MCF 10A (cell line): ENCODE measurements at regions of chr14 and their contacts with region 1.

Region 1: DNA sequence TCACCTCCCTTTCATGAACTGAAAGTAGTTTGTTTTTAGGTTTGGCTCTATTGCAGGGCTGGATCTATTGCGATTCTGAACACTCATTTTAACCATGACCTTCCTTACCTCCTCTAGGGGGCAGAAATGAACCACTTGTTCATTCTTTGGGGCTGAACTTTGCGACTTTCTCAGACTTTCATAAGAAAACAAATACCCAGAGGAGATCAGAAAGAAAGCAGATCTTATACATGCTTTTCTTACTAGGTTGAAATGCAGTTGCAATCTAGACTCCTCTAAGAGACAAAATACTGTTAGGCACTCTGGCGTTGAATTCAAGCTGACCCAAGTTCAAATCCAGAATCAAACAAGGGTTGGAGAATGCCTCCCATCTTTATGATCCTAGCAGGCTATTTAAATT is 32.6 kb upstream of the PLEKHG3 start:
- DNase-seq: peak; percentile 81
- H3K4me3 Mint-ChIP-seq: no peak overlapping the region
- H3K27ac Mint-ChIP-seq: no peak overlapping the region
- H3K4me1 Mint-ChIP-seq: peaks cover 41% of the 10 kb centered on the region
- H3K27me3 Mint-ChIP-seq: no peaks in the 10 kb centered on the region
- CTCF ChIP-seq: peak; percentile 69

Region 2: GRCh38 chr14:64591809-64592208 is 79.8 kb before region 1 on chr14:
- CTCF ChIA-PET with region 1: no interaction called
- POLR2A ChIA-PET with region 1: no interaction called
- intact Hi-C with region 1: no loop called
- DNase-seq: no peak
- H3K4me3 Mint-ChIP-seq: no peak overlapping the region
- H3K27ac Mint-ChIP-seq: no peak overlapping the region
- H3K4me1 Mint-ChIP-seq: no peaks in the 10 kb centered on the region
- H3K27me3 Mint-ChIP-seq: no peaks in the 10 kb centered on the region
- CTCF ChIP-seq: no peak

Region 3: GRCh38 chr14:64654246-64654900 is 17.2 kb before region 1 on chr14:
- CTCF ChIA-PET with region 1: interaction called, 3 read pairs
- POLR2A ChIA-PET with region 1: interaction called, 16 read pairs
- intact Hi-C with region 1: no loop called
- DNase-seq: peak; percentile 87
- H3K4me3 Mint-ChIP-seq: no peak overlapping the region
- H3K27ac Mint-ChIP-seq: peak overlapping the region; percentile 75
- H3K4me1 Mint-ChIP-seq: peaks cover 34% of the 10 kb centered on the region
- H3K27me3 Mint-ChIP-seq: no peaks in the 10 kb centered on the region
- CTCF ChIP-seq: no peak

Region 4: DNA sequence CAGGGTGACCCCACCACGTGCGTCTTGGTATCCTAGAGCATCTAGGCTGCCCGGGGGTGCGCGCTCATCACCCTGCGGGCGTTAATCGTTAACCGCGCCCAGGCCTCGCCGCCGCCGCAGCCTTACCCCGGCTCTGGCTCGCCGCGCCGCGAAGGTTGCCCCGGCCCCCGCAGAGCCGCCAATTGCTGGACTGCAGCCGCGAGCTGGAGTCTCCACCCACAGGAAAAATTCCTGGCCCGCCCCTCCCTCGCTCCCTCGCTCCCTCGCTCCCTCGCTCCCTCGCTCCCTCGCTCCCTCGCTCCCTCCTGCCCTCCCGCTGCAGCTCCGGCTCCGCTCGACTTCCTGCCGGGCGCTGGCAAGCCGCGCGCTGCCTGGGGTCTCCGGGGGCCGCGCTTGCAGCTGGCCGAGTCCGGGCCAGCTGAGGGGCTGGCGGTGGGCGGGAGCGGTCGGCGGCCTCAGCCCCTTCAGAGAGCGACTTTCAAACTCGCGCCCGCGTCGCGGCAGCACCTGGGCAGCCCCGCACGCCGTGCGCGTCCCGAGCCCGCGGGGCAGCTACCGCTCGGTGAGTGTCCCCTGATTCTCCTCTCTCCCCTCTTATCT is 32.7 kb after region 1 on chr14 and contains the start of gene PLEKHG3:
- CTCF ChIA-PET with region 1: interaction called, 40 read pairs
- POLR2A ChIA-PET with region 1: interaction called, 386 read pairs
- intact Hi-C with region 1: loop called (anchors 2 kb)
- DNase-seq: peak; percentile 80
- H3K4me3 Mint-ChIP-seq: peak within 1 kb of the TSS; percentile 81
- H3K27ac Mint-ChIP-seq: peak within 1 kb of the TSS; percentile 49
- H3K4me1 Mint-ChIP-seq: peaks cover 53% of the 10 kb centered on the region
- H3K27me3 Mint-ChIP-seq: no peaks in the 10 kb centered on the region
- CTCF ChIP-seq: no peak
- total RNA-seq, gene PLEKHG3: 52.9 and 72.8 TPM in 2 replicates

Region 5: DNA sequence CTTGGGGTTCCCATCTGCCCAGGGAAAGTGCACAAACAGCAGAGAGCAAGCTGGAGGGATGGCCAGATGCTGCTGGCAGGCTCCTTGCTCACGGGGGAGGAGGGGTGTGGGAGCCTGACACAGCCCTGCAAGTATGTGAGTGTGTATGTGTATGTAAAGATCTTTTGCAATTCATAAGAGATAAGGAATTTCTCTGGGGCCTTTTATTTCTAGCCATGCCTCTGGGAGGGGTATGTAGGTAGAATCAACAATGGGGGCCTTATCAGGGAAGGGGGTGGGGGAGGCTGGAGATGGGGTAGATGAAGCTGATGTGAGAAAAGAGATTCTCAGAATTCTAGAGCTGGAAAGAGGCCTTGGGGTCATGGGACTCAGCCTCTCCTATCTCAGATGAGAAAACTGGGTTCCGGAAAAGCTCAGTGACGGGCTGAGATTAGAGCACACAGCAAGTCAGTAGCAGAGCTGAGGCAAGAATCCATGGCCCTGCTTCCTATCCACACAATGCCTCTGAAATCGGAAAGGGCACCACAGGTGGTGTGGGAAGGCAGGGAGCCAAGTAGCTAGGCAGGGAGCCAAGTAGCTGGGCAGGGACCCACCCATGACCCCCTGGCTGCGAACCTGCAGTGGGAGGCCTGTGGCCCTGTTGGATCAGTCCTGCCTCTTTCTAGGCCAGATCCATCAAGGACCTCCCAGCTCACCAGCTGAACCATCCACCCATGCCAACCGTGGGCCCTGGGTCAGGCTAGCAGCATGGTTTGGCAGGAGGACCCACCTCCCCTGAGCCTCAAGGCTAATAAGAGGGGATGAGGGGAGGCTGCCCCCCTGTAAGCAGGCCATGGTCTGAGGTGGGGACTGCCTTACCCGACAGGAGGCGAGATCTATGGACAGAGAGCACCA is 87.3 kb after region 1 on chr14:
- CTCF ChIA-PET with region 1: interaction called, 68 read pairs
- POLR2A ChIA-PET with region 1: interaction called, 43 read pairs
- intact Hi-C with region 1: loop called (anchors 1 kb)
- DNase-seq: peak; percentile 65
- H3K4me3 Mint-ChIP-seq: peak overlapping the region; percentile 20
- H3K27ac Mint-ChIP-seq: peak overlapping the region; percentile 47
- H3K4me1 Mint-ChIP-seq: peaks cover 90% of the 10 kb centered on the region
- H3K27me3 Mint-ChIP-seq: no peaks in the 10 kb centered on the region
- CTCF ChIP-seq: no peak

Region 6: DNA sequence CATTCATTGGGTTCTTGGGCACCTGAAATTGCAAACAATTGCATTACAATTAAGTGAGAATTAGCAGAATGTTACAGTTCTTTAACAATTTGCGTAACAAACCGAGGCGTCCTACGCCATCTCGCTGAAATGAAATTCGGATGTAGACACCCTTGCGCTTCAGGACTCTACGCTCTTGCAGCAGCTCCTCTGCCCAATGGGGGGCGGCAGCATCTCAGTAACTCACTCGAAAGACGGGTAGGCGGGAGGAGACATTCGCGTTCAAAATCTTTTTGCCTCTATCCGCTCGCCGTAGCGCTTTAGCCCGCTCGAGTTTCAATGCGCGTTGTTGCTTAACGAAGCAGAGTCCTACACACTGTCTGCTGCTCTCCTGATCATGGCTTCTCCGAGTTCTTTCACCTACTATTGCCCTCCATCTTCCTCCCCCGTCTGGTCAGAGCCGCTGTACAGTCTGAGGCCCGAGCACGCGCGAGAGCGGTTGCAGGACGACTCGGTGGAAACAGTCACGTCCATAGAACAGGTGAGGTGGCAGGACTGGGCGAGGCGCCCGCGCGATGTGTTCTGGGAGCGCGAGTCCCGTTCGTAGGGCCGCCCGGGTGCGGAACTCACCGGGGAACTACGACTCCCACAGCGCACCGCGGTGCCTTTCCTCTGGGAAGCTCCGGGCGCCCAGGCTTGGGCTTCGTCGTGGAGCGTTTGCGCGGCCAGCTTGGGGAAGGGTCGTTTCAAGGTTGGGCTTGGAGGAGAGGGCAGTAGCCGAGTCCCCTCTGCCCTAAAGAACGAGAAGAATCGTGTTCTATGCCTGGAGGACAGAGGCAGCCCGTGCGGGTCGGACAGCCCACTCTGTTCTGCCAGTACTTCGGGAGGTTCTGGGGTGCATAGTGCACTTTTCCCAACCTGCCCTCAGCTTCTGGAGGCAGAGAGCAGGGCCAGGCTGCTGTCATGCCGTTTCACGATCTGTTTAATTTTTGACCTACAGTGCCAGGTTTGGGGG is 315.3 kb after region 1 on chr14 and contains the start of gene FNTB:
- CTCF ChIA-PET with region 1: interaction called, 3 read pairs
- POLR2A ChIA-PET with region 1: no interaction called
- intact Hi-C with region 1: loop called (anchors 10 kb)
- DNase-seq: peak; percentile 97
- H3K4me3 Mint-ChIP-seq: peak within 1 kb of the TSS; percentile 79
- H3K27ac Mint-ChIP-seq: peak within 1 kb of the TSS; percentile 76
- H3K4me1 Mint-ChIP-seq: peaks cover 10% of the 10 kb centered on the region
- H3K27me3 Mint-ChIP-seq: peaks cover 12% of the 10 kb centered on the region
- CTCF ChIP-seq: peak; percentile 45
- total RNA-seq, gene FNTB: 12.2 and 13.1 TPM in 2 replicates